Activated B cell treated with CpG ODN at 0.5 μM for 24 hours (primary cell): ENCODE measurements at regions of chr14 and their contacts with region 1.

Region 1: GRCh38 chr14:73633116-73634010 is 11.4 kb upstream of the DNAL1 start:
- DNase-seq: peak; percentile 52
- ATAC-seq: peak; percentile 83
- H3K4me3 Mint-ChIP-seq: peak overlapping the region; percentile 83
- H3K27ac Mint-ChIP-seq: peak overlapping the region; percentile 12
- H3K4me1 Mint-ChIP-seq: peaks cover 4% of the 10 kb centered on the region
- H3K27me3 Mint-ChIP-seq: peaks cover 11% of the 10 kb centered on the region
- CTCF ChIP-seq: no peak

Region 2: DNA sequence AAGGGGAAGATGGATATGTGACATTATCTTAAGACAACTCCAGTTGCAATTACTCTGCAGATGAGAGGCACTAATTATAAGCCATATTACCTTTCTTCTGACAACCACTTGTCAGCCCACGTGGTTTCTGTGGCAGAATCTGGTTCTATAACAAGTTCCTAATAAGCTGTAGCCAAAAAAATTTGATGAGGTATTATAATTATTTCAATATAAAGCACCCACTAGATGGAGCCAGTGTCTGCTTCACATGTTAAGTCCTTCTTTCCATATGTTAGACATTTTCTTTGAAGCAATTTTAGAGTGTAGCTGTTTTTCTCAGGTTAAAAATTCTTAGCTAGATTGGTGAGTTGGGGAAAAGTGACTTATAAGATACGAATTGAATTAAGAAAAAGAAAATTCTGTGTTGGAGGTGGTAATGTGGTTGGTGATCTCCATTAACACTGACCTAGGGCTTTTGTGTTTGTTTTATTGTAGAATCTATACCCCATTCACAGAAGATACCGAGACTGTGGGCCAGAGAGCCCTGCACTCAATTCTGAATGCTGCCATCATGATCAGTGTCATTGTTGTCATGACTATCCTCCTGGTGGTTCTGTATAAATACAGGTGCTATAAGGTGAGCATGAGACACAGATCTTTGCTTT is 460.1 kb before region 1 on chr14:
- CTCF ChIA-PET with region 1: no interaction called
- POLR2A ChIA-PET with region 1: no interaction called
- intact Hi-C with region 1: loop called (anchors 1 kb)
- DNase-seq: no peak
- ATAC-seq: no peak
- H3K4me3 Mint-ChIP-seq: no peak overlapping the region
- H3K27ac Mint-ChIP-seq: no peak overlapping the region
- H3K4me1 Mint-ChIP-seq: no peaks in the 10 kb centered on the region
- H3K27me3 Mint-ChIP-seq: no peaks in the 10 kb centered on the region
- CTCF ChIP-seq: no peak

Region 3: GRCh38 chr14:73472185-73473114 is 160.9 kb before region 1 on chr14:
- CTCF ChIA-PET with region 1: interaction called, 8 read pairs
- POLR2A ChIA-PET with region 1: no interaction called
- intact Hi-C with region 1: loop called (anchors 1 kb)
- DNase-seq: no peak
- ATAC-seq: peak; percentile 93
- H3K4me3 Mint-ChIP-seq: no peak overlapping the region
- H3K27ac Mint-ChIP-seq: no peak overlapping the region
- H3K4me1 Mint-ChIP-seq: peaks cover 9% of the 10 kb centered on the region
- H3K27me3 Mint-ChIP-seq: no peaks in the 10 kb centered on the region
- CTCF ChIP-seq: no peak

Region 4: DNA sequence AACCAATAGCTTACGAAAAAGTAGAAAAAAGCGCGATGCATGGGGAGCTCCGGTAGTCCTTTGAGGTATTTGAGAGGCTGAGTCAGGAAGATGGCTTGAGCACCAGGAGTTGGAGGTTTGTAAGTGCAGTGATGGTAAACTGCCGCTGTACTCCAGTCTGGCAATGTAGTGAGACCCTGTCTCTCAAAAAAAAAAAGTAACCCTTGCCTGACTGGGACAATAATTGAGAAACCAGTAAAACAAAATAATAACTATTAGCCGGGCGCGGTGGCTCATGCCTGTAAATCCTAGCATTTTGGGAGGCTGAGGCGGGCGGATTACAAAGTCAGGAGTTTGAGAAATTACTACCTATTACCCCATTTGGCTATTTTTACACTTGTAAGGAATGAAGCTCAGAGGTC is 65.0 kb before region 1 on chr14:
- CTCF ChIA-PET with region 1: interaction called, 12 read pairs
- POLR2A ChIA-PET with region 1: interaction called, 20 read pairs
- intact Hi-C with region 1: loop called (anchors 1 kb)
- DNase-seq: no peak
- ATAC-seq: no peak
- H3K4me3 Mint-ChIP-seq: peak overlapping the region; percentile 94
- H3K27ac Mint-ChIP-seq: peak overlapping the region; percentile 95
- H3K4me1 Mint-ChIP-seq: peaks cover 36% of the 10 kb centered on the region
- H3K27me3 Mint-ChIP-seq: no peaks in the 10 kb centered on the region
- CTCF ChIP-seq: no peak

Region 5: GRCh38 chr14:73825551-73826188 is 192.3 kb after region 1 on chr14:
- CTCF ChIA-PET with region 1: no interaction called
- POLR2A ChIA-PET with region 1: no interaction called
- intact Hi-C with region 1: loop called (anchors 2 kb)
- DNase-seq: peak; percentile 61
- ATAC-seq: peak; percentile 99
- H3K4me3 Mint-ChIP-seq: no peak overlapping the region
- H3K27ac Mint-ChIP-seq: no peak overlapping the region
- H3K4me1 Mint-ChIP-seq: peaks cover 6% of the 10 kb centered on the region
- H3K27me3 Mint-ChIP-seq: no peaks in the 10 kb centered on the region
- CTCF ChIP-seq: peak; percentile 96

Region 6: GRCh38 chr14:74618078-74618952 is 985.0 kb after region 1 on chr14:
- CTCF ChIA-PET with region 1: no interaction called
- POLR2A ChIA-PET with region 1: no interaction called
- intact Hi-C with region 1: no loop called
- DNase-seq: peak; percentile 32
- ATAC-seq: peak; percentile 71
- H3K4me3 Mint-ChIP-seq: peak overlapping the region; percentile 62
- H3K27ac Mint-ChIP-seq: peak overlapping the region; percentile 80
- H3K4me1 Mint-ChIP-seq: peaks cover 57% of the 10 kb centered on the region
- H3K27me3 Mint-ChIP-seq: peaks cover 7% of the 10 kb centered on the region
- CTCF ChIP-seq: no peak